ENCODE measurements at regions of chr14 and their contacts with region 1.

Region 1: GRCh38 chr14:76386915-76387782 is 11.2 kb downstream of the ESRRB start:
- DNase-seq: peak; percentile 77
- H3K4me3 Mint-ChIP-seq: no peak overlapping the region
- H3K27ac Mint-ChIP-seq: no peak overlapping the region
- H3K4me1 Mint-ChIP-seq: peaks cover 3% of the 10 kb centered on the region
- H3K27me3 Mint-ChIP-seq: peaks cover 58% of the 10 kb centered on the region
- CTCF ChIP-seq: peak; percentile 99

Region 2: GRCh38 chr14:75982266-75983018 is 404.7 kb before region 1 on chr14:
- CTCF ChIA-PET with region 1: interaction called, 5 read pairs
- POLR2A ChIA-PET with region 1: no interaction called
- intact Hi-C with region 1: loop called (anchors 2 kb)
- DNase-seq: peak; percentile 81
- H3K4me3 Mint-ChIP-seq: peak overlapping the region; percentile 73
- H3K27ac Mint-ChIP-seq: peak overlapping the region; percentile 78
- H3K4me1 Mint-ChIP-seq: peaks cover 34% of the 10 kb centered on the region
- H3K27me3 Mint-ChIP-seq: no peaks in the 10 kb centered on the region
- CTCF ChIP-seq: peak; percentile 72

Region 3: DNA sequence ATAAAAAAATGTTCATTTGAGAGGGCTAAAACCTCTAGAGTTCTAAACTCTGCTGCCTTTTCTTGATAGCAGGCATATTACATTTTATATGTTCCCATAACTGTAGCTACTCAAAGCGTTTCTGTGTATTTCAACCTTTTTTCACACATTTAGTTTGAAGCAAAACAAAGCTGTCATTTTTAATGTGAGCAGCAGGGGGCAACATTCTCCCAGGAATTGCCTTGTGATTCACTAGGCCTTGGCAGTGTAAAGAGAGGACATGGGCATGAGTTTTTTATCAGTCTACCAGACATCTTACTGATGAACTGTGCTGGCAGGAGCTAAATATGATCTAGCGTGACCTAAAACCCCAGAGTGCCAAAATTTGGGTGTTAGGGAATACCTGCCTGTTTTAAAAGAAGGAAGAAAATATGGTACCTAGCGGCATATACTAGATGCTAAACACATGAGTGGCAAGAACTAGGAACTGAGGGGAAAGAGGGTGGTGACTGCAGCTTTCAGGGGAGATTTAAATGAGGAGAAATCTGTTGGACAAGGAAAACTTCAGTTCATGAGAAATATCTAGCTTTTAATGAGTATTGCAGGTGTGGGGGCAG is 336.3 kb before region 1 on chr14:
- CTCF ChIA-PET with region 1: interaction called, 147 read pairs
- POLR2A ChIA-PET with region 1: interaction called, 5 read pairs
- intact Hi-C with region 1: loop called (anchors 1 kb)
- DNase-seq: peak; percentile 65
- H3K4me3 Mint-ChIP-seq: no peak overlapping the region
- H3K27ac Mint-ChIP-seq: no peak overlapping the region
- H3K4me1 Mint-ChIP-seq: no peaks in the 10 kb centered on the region
- H3K27me3 Mint-ChIP-seq: no peaks in the 10 kb centered on the region
- CTCF ChIP-seq: peak; percentile 84

Region 4: GRCh38 chr14:76376878-76377734 is 10.0 kb before region 1 on chr14:
- CTCF ChIA-PET with region 1: interaction called, 11 read pairs
- POLR2A ChIA-PET with region 1: no interaction called
- intact Hi-C with region 1: no loop called
- DNase-seq: no peak
- H3K4me3 Mint-ChIP-seq: peak overlapping the region; percentile 73
- H3K27ac Mint-ChIP-seq: no peak overlapping the region
- H3K4me1 Mint-ChIP-seq: no peaks in the 10 kb centered on the region
- H3K27me3 Mint-ChIP-seq: peaks cover 69% of the 10 kb centered on the region
- CTCF ChIP-seq: no peak

Region 5: GRCh38 chr14:76407449-76408150 is 20.5 kb after region 1 on chr14:
- CTCF ChIA-PET with region 1: interaction called, 11 read pairs
- POLR2A ChIA-PET with region 1: no interaction called
- intact Hi-C with region 1: no loop called
- DNase-seq: no peak
- H3K4me3 Mint-ChIP-seq: no peak overlapping the region
- H3K27ac Mint-ChIP-seq: no peak overlapping the region
- H3K4me1 Mint-ChIP-seq: no peaks in the 10 kb centered on the region
- H3K27me3 Mint-ChIP-seq: peaks cover 11% of the 10 kb centered on the region
- CTCF ChIP-seq: no peak

Region 6: DNA sequence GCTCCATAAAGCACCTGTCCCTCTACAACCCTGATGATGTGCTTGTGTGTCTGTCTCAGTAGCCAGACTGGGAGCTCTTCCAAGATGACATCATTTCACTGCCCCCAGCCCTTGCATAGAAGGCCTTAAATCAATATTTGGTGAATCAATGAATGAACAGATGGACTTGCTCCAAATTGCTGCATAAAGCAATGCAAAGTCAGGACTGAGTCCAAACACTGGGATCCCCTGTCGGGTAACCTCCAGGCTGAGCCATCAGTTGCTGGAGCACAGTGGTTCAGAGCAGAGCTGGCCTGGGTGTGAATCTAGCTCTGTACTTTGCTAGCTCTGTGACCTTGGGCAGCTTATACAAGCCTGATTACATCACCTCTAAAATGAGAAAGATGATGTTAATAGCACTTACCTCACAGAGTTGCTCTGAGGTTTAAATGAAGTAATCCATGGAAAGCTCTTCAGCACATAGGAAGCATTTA is 253.8 kb after region 1 on chr14:
- CTCF ChIA-PET with region 1: interaction called, 52 read pairs
- POLR2A ChIA-PET with region 1: no interaction called
- intact Hi-C with region 1: loop called (anchors 2 kb)
- DNase-seq: no peak
- H3K4me3 Mint-ChIP-seq: no peak overlapping the region
- H3K27ac Mint-ChIP-seq: no peak overlapping the region
- H3K4me1 Mint-ChIP-seq: no peaks in the 10 kb centered on the region
- H3K27me3 Mint-ChIP-seq: peaks cover 13% of the 10 kb centered on the region
- CTCF ChIP-seq: no peak

Region 7: DNA sequence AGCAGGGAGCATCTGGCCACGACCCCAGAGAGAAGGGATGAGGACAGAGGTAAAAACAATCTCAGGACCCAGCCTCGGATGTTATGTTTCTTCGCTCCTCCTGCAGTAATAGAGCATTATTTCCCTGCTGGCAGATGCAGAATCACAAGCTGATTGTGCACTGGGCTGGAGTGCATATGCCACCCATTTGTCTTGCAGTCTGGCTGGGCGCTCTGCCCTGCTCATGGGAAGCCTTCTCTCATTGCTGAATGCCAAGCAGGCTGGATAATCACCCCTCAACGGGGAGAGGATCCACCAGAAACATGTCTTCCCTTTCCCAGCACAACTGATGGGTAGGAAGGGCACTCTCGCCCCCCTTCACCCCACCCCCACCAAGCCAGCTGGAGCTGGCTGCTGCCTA is 365.6 kb after region 1 on chr14:
- CTCF ChIA-PET with region 1: no interaction called
- POLR2A ChIA-PET with region 1: no interaction called
- intact Hi-C with region 1: no loop called
- DNase-seq: no peak
- H3K4me3 Mint-ChIP-seq: no peak overlapping the region
- H3K27ac Mint-ChIP-seq: no peak overlapping the region
- H3K4me1 Mint-ChIP-seq: no peaks in the 10 kb centered on the region
- H3K27me3 Mint-ChIP-seq: peaks cover 46% of the 10 kb centered on the region
- CTCF ChIP-seq: no peak